ENCODE measurements at regions of chr20 and their contacts with region 1.

Region 1: GRCh38 chr20:24100385-24101011 is 111.9 kb upstream of the GGTLC1 start:
- DNase-seq: peak in 1 of 2 donors; percentile 36
- ATAC-seq: peak in 2 of 4 donors; percentile 56 to 73
- H3K4me3 ChIP-seq: no peak overlapping the region
- H3K27ac ChIP-seq: no peak overlapping the region
- H3K4me1 ChIP-seq: no peaks in the 10 kb centered on the region
- H3K27me3 ChIP-seq: peaks cover 0 to 7% (median 0%) of the 10 kb centered on the region in 3 donors
- CTCF ChIP-seq: peak; percentile 46

Region 2: DNA sequence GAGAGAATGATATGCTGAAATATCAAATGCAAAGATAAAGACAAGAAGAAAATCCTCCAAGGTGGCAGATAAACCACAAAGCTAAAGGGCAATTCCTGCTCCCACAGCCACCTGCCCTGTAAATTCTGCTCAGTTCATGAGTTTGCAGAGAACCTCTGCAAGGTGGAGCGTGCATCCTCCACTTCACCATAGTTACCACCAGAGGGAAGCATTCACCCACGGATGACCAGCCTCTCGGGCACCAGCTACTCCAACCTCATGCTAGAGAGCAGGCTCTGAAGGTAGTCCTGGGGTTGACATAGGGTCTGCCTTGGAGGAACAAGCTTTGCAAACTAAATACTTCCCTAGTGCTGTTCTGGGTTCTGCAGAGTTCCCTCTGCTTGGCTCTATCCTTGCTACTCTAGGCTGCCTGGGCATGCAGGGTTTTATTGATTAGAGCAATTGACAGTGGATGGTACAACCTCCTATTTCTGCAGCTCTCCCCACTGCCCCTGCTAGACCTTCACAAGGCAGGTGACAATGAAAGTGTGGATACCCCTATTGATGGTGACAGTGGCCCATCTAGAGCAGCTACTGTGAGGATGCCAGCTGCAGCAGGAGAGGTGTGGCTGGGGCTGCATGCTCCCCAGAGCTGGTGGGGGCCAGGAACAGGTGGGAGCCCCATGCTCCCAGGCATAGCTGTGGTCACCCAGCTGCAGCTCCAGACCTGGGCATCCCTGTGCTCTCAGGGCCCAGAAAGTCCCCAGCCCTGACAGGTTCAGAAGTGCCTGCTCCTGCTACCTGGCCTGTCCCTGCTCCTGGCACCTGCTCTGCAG is 163.0 kb before region 1 on chr20:
- intact Hi-C with region 1: loop called in 1 of 2 experiments (anchors 5 kb)
- DNase-seq: no peak
- ATAC-seq: peak; percentile 63 to 77 (median 71)
- H3K4me3 ChIP-seq: no peak overlapping the region
- H3K27ac ChIP-seq: no peak overlapping the region
- H3K4me1 ChIP-seq: no peaks in the 10 kb centered on the region
- H3K27me3 ChIP-seq: peaks cover 0 to 5% (median 0%) of the 10 kb centered on the region in 3 donors
- CTCF ChIP-seq: peak; percentile 65

Region 3: DNA sequence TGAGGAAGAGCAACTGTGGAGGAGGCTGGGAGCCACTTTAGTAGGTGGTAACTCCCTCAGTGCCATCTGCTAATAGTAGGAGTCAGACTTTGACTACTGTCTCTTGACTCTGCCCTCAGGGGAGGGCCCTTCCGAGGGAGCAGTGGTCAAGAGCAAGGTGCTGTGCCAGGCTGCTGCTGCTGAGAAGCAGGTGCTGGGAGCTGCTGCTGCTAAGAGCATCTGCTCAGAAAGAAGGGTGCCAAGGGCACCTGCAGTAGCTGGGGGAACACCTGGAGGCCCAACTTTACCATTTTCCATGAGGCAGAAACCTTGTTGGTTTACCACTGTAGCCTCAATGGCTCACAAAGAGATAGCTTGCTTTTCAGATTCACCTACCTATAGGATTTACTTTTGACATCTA is 130.4 kb before region 1 on chr20:
- intact Hi-C with region 1: no loop called
- DNase-seq: no peak
- ATAC-seq: no peak
- H3K4me3 ChIP-seq: no peak overlapping the region
- H3K27ac ChIP-seq: no peak overlapping the region
- H3K4me1 ChIP-seq: no peaks in the 10 kb centered on the region
- H3K27me3 ChIP-seq: no peaks in the 10 kb centered on the region
- CTCF ChIP-seq: no peak

Region 4: GRCh38 chr20:24066076-24066700 is 34.3 kb before region 1 on chr20:
- intact Hi-C with region 1: no loop called
- DNase-seq: no peak
- ATAC-seq: no peak
- H3K4me3 ChIP-seq: no peak overlapping the region
- H3K27ac ChIP-seq: no peak overlapping the region
- H3K4me1 ChIP-seq: no peaks in the 10 kb centered on the region
- H3K27me3 ChIP-seq: no peaks in the 10 kb centered on the region
- CTCF ChIP-seq: no peak

Measured in psoas muscle (tissue), 8 donors.